ENCODE measurements at regions of chr15 and their contacts with region 1.

Region 1: GRCh38 chr15:98311566-98312188 is 336.7 kb upstream of the IGF1R start:
- DNase-seq: peak; percentile 33 to 78 (median 59)
- ATAC-seq: no peak
- H3K4me3 ChIP-seq: no peak overlapping the region
- H3K4me3 Mint-ChIP-seq: no peak overlapping the region
- H3K27ac ChIP-seq: no peak overlapping the region
- H3K27ac Mint-ChIP-seq: no peak overlapping the region
- H3K4me1 ChIP-seq: no peaks in the 10 kb centered on the region
- H3K4me1 Mint-ChIP-seq: no peaks in the 10 kb centered on the region
- H3K27me3 ChIP-seq: no peaks in the 10 kb centered on the region
- H3K27me3 Mint-ChIP-seq: peaks cover 22% of the 10 kb centered on the region
- CTCF ChIP-seq: peak; percentile 91

Region 2: DNA sequence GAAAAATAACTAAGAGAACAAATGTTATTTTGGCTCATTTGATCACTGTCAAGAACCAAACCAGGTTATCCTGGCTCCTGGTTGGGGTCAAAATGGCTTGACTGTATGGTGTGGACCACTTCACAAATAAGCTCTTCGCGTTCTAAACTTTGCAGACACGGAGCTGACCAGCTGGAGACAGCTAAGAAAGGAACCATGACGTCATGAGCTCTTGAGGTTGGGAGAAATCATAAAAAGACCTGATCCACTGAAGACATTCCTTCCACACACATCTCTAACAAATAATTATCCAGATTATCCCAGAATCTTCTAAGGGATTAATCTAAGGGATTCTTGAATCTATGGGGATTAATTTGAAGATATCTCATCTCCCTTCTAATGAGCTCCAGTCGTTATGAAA is 15.1 kb after region 1 on chr15:
- CTCF ChIA-PET with region 1: interaction called, 11 read pairs
- POLR2A ChIA-PET with region 1: no interaction called
- intact Hi-C with region 1: no loop called
- DNase-seq: no peak
- ATAC-seq: no peak
- H3K4me3 ChIP-seq: no peak overlapping the region
- H3K4me3 Mint-ChIP-seq: no peak overlapping the region
- H3K27ac ChIP-seq: no peak overlapping the region
- H3K27ac Mint-ChIP-seq: no peak overlapping the region
- H3K4me1 ChIP-seq: no peaks in the 10 kb centered on the region
- H3K4me1 Mint-ChIP-seq: no peaks in the 10 kb centered on the region
- H3K27me3 ChIP-seq: no peaks in the 10 kb centered on the region
- H3K27me3 Mint-ChIP-seq: peaks cover 5% of the 10 kb centered on the region
- CTCF ChIP-seq: no peak

Region 3: GRCh38 chr15:98421419-98422129 is 109.9 kb after region 1 on chr15:
- CTCF ChIA-PET with region 1: interaction called, 13 read pairs
- POLR2A ChIA-PET with region 1: no interaction called
- intact Hi-C with region 1: loop called (anchors 1 kb)
- DNase-seq: peak; percentile 10 to 76 (median 57)
- ATAC-seq: no peak
- H3K4me3 ChIP-seq: peak overlapping the region; percentile 15 to 39
- H3K4me3 Mint-ChIP-seq: no peak overlapping the region
- H3K27ac ChIP-seq: no peak overlapping the region
- H3K27ac Mint-ChIP-seq: no peak overlapping the region
- H3K4me1 ChIP-seq: peaks cover 14% of the 10 kb centered on the region
- H3K4me1 Mint-ChIP-seq: peaks cover 5% of the 10 kb centered on the region
- H3K27me3 ChIP-seq: peaks cover 5 to 11% of the 10 kb centered on the region in 2 experiments
- H3K27me3 Mint-ChIP-seq: peaks cover 40% of the 10 kb centered on the region
- CTCF ChIP-seq: peak; percentile 96

Region 4: DNA sequence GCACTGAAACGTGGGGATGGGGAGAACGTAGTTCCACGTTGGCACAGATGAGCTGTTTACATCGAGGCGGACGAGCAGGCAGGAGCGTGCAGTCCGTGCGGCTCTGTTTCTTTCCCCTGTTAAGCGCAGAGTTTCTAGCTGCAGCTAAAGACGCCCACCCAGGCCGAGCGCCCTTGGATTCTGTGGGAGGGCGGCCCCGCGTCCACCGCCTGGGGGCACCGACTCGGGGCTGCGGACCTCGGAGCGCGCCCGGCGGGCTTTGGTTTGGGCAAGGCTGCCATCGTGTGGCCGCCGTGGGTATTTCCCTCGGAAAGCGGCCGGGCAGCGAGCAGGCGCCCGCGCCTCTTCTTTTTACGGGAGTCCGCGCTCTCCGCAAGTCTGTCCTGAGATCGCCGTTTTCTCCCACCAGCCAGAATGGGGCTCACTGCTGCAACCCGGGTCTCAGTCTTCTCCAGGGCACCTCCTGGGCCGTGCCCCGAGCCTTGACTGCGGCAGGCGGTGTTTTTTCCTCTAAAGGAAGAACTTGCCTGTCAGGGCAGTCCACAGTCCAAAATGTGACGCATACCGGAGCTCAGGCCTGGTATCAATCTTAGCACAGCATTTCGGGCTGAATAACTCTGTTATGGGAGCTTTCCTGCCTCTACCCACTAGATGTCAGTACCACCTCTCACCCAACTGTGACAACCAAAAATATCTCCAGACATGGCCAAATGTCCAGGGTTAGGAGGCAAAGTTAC is 116.7 kb after region 1 on chr15:
- CTCF ChIA-PET with region 1: interaction called, 14 read pairs
- POLR2A ChIA-PET with region 1: no interaction called
- intact Hi-C with region 1: loop called in 1 of 2 experiments (anchors 2 kb)
- DNase-seq: peak in 8 of 9 experiments; percentile 18 to 77 (median 56)
- ATAC-seq: peak; percentile 42
- H3K4me3 ChIP-seq: peak overlapping the region; percentile 3 to 17
- H3K4me3 Mint-ChIP-seq: peak overlapping the region; percentile 45
- H3K27ac ChIP-seq: no peak overlapping the region
- H3K27ac Mint-ChIP-seq: no peak overlapping the region
- H3K4me1 ChIP-seq: peaks cover 6% of the 10 kb centered on the region
- H3K4me1 Mint-ChIP-seq: peaks cover 7% of the 10 kb centered on the region
- H3K27me3 ChIP-seq: peaks cover 7 to 9% of the 10 kb centered on the region in 2 experiments
- H3K27me3 Mint-ChIP-seq: peaks cover 53% of the 10 kb centered on the region
- CTCF ChIP-seq: peak; percentile 86

Measured in CD8-positive, alpha-beta T cell (primary cell).